ENCODE measurements at regions of chr9 and their contacts with region 1.

Region 1: DNA sequence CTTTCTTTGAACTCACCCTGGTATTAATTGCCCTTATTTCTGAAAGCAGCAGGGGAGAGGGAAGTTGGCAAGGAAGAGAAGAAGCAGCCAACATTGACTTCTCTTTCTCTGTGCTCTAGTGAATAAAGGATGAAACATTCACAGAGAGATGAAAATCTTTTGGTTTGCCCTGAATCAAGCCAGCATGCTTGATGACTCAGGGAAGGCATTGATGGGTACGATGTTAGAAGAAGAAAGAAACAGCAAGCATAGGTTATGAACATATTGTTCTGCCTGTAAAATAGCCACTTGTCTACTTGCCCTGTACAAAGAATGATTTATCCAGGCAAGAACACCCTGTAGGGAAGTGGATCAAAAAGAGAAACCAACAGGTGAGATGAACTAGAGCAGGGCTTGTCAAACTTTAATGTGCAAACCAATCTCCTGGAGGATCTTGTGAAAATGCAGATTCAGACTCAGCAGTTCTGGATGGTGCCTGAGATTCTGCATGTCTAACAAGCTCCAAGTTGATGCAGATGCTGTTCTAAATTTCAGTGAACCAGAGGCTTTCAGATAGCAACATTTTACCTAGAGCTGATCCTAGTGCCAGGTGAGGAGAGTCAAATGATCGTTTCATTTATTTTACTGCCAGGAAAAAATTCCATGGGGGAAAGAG is 586.6 kb upstream of the TLE4 start:
- DNase-seq: no peak
- H3K4me3 ChIP-seq: no peak overlapping the region
- H3K27ac ChIP-seq: no peak overlapping the region
- H3K4me1 ChIP-seq: no peaks in the 10 kb centered on the region
- H3K27me3 ChIP-seq: no peaks in the 10 kb centered on the region
- CTCF ChIP-seq: no peak

Region 2: GRCh38 chr9:79026316-79026715 is 41.1 kb after region 1 on chr9:
- CTCF ChIA-PET with region 1: no interaction called
- POLR2A ChIA-PET with region 1: interaction called, 3 read pairs
- intact Hi-C with region 1: loop called (anchors 5 kb)
- DNase-seq: peak in 1 of 2 experiments; percentile 11
- H3K4me3 ChIP-seq: no peak overlapping the region
- H3K27ac ChIP-seq: no peak overlapping the region
- H3K4me1 ChIP-seq: no peaks in the 10 kb centered on the region
- H3K27me3 ChIP-seq: no peaks in the 10 kb centered on the region
- CTCF ChIP-seq: no peak

Region 3: GRCh38 chr9:79630521-79631403 is 645.6 kb after region 1 on chr9:
- CTCF ChIA-PET with region 1: no interaction called
- POLR2A ChIA-PET with region 1: no interaction called
- intact Hi-C with region 1: no loop called
- DNase-seq: no peak
- H3K4me3 ChIP-seq: no peak overlapping the region
- H3K27ac ChIP-seq: no peak overlapping the region
- H3K4me1 ChIP-seq: no peaks in the 10 kb centered on the region
- H3K27me3 ChIP-seq: peaks cover 37% of the 10 kb centered on the region
- CTCF ChIP-seq: no peak